ENCODE measurements at regions of chr4 and their contacts with region 1.

Region 1: DNA sequence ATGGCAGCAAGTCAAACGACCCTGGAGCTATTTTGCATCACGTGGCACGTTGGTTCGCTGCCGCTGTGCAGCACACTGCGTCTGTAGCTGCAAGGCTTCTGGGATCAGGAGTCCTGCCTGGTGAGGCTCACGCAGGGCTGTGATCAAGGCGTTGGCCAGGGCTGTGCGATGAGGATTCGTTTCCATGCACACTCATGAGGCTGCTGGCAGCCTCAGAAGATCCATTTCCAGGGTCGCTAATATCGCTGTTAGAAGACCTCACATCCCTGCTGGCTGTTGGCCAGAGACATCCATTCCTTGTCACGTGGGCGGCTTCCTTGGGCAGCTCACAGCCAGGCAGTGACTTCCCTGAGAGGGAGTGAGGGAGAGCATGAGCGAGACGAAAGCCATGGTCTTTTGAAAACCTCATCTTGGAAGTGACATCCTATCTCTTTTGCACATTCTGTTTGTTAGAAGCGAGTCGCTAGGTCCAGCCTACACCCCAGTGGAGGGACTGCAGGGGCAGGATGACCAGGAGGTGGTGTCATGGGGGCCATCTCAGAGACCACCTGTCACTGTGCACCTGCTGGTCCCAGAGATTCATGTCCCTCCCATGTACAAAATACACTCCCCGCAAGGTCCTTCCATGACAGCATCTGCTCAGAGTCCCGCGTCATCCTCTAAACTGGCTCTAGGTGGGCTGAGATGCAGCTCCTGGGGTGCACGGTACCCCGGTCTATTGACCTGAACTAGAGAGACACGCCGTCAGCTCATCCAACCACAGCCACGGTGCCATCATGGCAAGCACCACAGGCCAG is 12.2 kb downstream of the RGS12 start:
- DNase-seq: no peak
- ATAC-seq: no peak
- H3K4me3 ChIP-seq: no peak overlapping the region
- H3K4me3 Mint-ChIP-seq: peak overlapping the region in 6 of 10 donors; percentile 13 to 67 (median 51)
- H3K27ac ChIP-seq: no peak overlapping the region
- H3K27ac Mint-ChIP-seq: peak overlapping the region in 7 of 9 donors; percentile 36 to 92 (median 67)
- H3K4me1 ChIP-seq: peaks cover 40 to 53% of the 10 kb centered on the region in 2 donors
- H3K4me1 Mint-ChIP-seq: peaks cover 43 to 84% (median 56%) of the 10 kb centered on the region in 7 donors
- H3K27me3 ChIP-seq: no peaks in the 10 kb centered on the region
- H3K27me3 Mint-ChIP-seq: peaks cover 0 to 39% (median 0%) of the 10 kb centered on the region in 5 donors

Region 2: GRCh38 chr4:3201718-3202702 is 103.0 kb before region 1 on chr4:
- CTCF ChIA-PET with region 1: interaction called, 3 read pairs
- POLR2A ChIA-PET with region 1: no interaction called
- intact Hi-C with region 1: loop called (anchors 1 kb)
- DNase-seq: peak; percentile 25 to 93 (median 88)
- ATAC-seq: peak; percentile 96
- H3K4me3 ChIP-seq: peak overlapping the region; percentile 34
- H3K4me3 Mint-ChIP-seq: peak overlapping the region; percentile 73 to 88 (median 82)
- H3K27ac ChIP-seq: peak overlapping the region; percentile 29
- H3K27ac Mint-ChIP-seq: peak overlapping the region; percentile 55 to 94 (median 84)
- H3K4me1 ChIP-seq: peaks cover 40% of the 10 kb centered on the region in 2 donors
- H3K4me1 Mint-ChIP-seq: peaks cover 31 to 73% (median 57%) of the 10 kb centered on the region in 7 donors
- H3K27me3 ChIP-seq: no peaks in the 10 kb centered on the region
- H3K27me3 Mint-ChIP-seq: no peaks in the 10 kb centered on the region

Region 3: GRCh38 chr4:3269991-3270611 is 34.9 kb before region 1 on chr4:
- CTCF ChIA-PET with region 1: no interaction called
- POLR2A ChIA-PET with region 1: no interaction called
- intact Hi-C with region 1: no loop called
- DNase-seq: peak in 1 of 9 donors; percentile 15
- ATAC-seq: no peak
- H3K4me3 ChIP-seq: no peak overlapping the region
- H3K4me3 Mint-ChIP-seq: no peak overlapping the region
- H3K27ac ChIP-seq: no peak overlapping the region
- H3K27ac Mint-ChIP-seq: no peak overlapping the region
- H3K4me1 ChIP-seq: no peaks in the 10 kb centered on the region
- H3K4me1 Mint-ChIP-seq: peaks cover 0 to 1% (median 0%) of the 10 kb centered on the region in 7 donors
- H3K27me3 ChIP-seq: no peaks in the 10 kb centered on the region
- H3K27me3 Mint-ChIP-seq: peaks cover 0 to 15% (median 0%) of the 10 kb centered on the region in 5 donors

Region 4: GRCh38 chr4:3292571-3293400 is 12.2 kb before region 1 on chr4 and contains the start of gene RGS12:
- CTCF ChIA-PET with region 1: no interaction called
- POLR2A ChIA-PET with region 1: interaction called, 3 read pairs
- intact Hi-C with region 1: loop called (anchors 1 kb)
- DNase-seq: peak; percentile 65 to 91 (median 75)
- ATAC-seq: peak; percentile 91
- H3K4me3 ChIP-seq: peak within 1 kb of the TSS; percentile 79
- H3K4me3 Mint-ChIP-seq: peak within 1 kb of the TSS; percentile 86 to 98 (median 92)
- H3K27ac ChIP-seq: peak within 1 kb of the TSS; percentile 69
- H3K27ac Mint-ChIP-seq: peak within 1 kb of the TSS; percentile 68 to 93 (median 82)
- H3K4me1 ChIP-seq: peaks cover 5 to 8% of the 10 kb centered on the region in 2 donors
- H3K4me1 Mint-ChIP-seq: peaks cover 12 to 37% (median 33%) of the 10 kb centered on the region in 7 donors
- H3K27me3 ChIP-seq: no peaks in the 10 kb centered on the region
- H3K27me3 Mint-ChIP-seq: peaks cover 0 to 67% (median 0%) of the 10 kb centered on the region in 5 donors
- total RNA-seq, gene RGS12: 2.5 to 13.3 (median 7.5) TPM

Region 5: DNA sequence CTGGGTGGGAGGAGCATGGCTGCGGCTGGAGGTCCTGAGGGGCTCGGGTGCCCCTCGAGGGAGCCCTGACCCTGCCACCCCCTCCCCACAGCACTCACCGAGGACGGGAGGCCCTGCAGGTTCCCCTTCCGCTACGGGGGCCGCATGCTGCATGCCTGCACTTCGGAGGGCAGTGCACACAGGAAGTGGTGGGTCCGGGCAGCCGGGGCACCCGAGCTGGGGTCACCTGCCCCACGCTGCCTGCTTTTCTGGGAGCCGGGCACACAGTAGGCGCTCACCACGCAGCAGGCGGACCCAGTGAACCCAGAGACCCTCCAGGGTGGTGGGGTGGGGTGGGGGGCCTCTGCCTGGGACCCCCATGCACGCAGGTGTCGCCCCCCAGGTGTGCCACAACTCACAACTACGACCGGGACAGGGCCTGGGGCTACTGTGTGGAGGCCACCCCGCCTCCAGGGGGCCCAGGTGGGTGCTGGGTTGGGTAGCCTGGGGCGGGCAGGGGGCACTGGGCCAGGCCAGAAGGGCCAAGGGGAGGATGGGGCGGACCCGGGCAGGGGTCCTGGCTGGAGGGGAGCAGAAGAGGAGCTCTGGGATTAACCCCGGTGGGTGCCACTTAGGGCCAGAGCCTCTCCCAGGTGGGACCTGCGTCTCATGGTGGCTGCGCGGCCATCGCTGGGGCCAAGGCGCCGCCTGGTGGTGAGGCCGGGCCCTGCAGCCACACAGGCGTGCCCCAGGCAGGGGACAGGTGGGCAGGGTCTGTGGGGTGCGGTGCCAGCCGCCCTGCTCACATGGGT is 138.2 kb after region 1 on chr4:
- CTCF ChIA-PET with region 1: no interaction called
- POLR2A ChIA-PET with region 1: no interaction called
- intact Hi-C with region 1: loop called in 1 of 2 experiments (anchors 5 kb)
- DNase-seq: peak; percentile 40 to 83 (median 69)
- ATAC-seq: peak; percentile 73
- H3K4me3 ChIP-seq: no peak overlapping the region
- H3K4me3 Mint-ChIP-seq: no peak overlapping the region
- H3K27ac ChIP-seq: no peak overlapping the region
- H3K27ac Mint-ChIP-seq: no peak overlapping the region
- H3K4me1 ChIP-seq: peaks cover 0 to 7% of the 10 kb centered on the region in 2 donors
- H3K4me1 Mint-ChIP-seq: no peaks in the 10 kb centered on the region
- H3K27me3 ChIP-seq: no peaks in the 10 kb centered on the region
- H3K27me3 Mint-ChIP-seq: no peaks in the 10 kb centered on the region